ENCODE measurements at regions of chr15 and their contacts with region 1.

Region 1: DNA sequence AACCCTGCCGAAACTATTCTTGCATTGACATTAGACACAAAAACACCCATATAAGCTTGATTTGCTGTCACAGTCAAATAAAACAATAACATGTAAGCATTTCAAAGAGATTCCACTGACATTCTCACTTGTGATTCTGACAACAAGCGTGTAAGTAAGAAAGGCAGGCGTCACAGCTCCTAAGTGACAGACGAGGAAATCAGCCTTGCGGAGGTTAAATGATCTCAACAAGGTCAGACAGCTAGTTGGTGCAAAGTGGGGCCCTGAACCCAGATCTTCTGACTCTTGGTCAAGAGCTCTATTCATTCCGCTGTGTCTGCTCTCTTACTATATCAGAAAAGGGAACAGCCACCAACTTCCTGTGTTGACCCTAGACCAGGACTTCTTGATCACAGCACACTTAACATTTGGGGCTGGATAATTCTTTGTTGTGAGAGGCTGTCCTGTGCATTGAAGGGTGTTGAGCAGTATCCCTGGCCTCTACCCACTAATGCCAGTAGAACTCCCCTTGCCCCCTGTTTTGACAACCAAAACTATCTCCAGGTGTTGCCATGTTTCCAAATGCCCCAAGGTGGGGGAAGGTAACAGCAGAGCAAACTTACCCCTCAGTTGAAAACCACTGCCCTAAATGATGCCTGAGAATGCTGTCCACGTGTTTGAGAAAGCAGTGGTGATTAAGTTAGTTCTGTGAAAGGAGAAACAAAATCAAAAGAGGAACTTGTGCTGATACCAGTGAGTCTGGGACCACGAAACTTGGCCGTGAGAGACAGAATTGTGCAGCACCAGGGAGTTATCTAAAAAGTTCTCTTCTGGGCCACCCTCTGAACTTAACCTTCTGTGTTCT is 86.1 kb downstream of the LIPC start:
- DNase-seq: peak; percentile 85
- ATAC-seq: peak; percentile 88
- H3K4me3 ChIP-seq: no peak overlapping the region
- H3K27ac ChIP-seq: peak overlapping the region; percentile 95
- H3K4me1 ChIP-seq: peaks cover 59% of the 10 kb centered on the region
- H3K27me3 ChIP-seq: no peaks in the 10 kb centered on the region
- CTCF ChIP-seq: no peak
- EP300 ChIP-seq: peak in 1 of 2 experiments; percentile 54; a peak in 1 of 4 replicates
- POLR2A ChIP-seq: no peak
- RAD21 ChIP-seq: no peak

Region 2: DNA sequence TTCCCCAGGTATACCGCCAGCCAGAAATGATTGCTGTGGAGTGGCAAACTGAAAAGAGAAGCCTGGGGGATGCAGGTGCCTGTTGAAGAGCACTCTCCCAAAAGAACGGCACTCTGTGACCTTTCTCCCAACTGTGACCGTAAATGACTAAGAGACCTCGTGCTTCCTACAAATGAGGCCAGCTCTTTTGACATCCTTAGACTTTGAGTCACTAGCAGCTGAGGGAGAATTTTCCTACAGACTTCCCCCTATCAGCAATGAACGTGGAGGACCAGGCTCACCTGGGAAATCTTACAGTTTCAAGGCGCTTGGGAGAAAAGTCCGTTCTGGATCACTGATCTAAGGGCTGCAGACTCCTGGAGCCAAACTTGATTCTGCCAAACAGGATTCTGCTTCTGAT is 371.2 kb before region 1 on chr15:
- CTCF ChIA-PET with region 1: no interaction called
- POLR2A ChIA-PET with region 1: no interaction called
- RAD21 ChIA-PET with region 1: no interaction called
- SMC1A ChIA-PET with region 1: no interaction called
- in situ Hi-C with region 1: no loop called
- intact Hi-C with region 1: no loop called
- DNase-seq: no peak
- ATAC-seq: no peak
- H3K4me3 ChIP-seq: no peak overlapping the region
- H3K27ac ChIP-seq: no peak overlapping the region
- H3K4me1 ChIP-seq: no peaks in the 10 kb centered on the region
- H3K27me3 ChIP-seq: 0 out of 4 replicates have a peak, but pooled peaks cover 0 to 2% of the 10 kb centered on the region in 2 experiments
- CTCF ChIP-seq: no peak
- EP300 ChIP-seq: no peak
- POLR2A ChIP-seq: no peak
- RAD21 ChIP-seq: no peak

Region 3: DNA sequence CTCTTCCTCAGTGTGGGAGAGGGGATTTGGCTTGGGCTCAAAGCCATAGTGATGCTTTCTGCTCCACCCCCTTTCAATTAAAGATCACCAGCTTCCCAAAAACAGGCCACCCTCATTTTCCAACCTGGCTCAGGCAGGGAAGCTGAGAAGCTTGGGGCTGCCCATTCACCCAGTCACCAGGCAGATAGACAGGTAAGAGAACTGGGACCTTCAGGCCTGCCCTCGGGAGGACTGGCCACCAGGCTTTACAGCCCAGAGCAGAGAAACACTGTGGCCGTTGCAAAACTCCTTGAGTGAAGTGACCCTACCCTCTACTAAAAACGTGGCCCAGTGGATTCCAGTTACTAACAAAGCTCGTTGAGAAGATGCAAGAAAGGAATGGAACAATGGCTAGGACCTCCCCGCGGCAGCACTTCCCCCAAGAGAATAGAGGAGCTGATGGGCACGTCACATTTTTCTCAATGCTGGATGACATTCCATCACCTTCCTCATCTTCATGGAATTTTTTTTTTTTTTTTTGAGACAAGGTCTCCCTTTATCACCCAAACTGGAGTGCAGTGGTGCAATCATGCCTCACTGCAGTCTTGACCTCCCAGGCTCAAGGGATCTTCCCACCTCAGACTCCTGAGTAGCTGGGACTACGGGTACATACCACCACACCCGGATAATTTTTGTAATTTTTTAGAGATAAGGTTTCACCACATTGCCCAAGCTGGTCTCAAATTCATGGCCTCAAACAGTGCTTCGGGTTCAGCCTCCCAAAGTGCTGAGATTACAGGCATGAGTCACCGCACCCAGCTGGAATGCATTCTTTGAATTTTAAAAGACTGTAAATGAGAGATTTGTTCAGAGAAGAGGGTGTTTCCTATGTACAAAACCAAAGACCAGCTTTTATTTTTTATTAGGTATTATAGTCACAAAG is 48.2 kb before region 1 on chr15:
- CTCF ChIA-PET with region 1: interaction called, 6 read pairs
- POLR2A ChIA-PET with region 1: no interaction called
- RAD21 ChIA-PET with region 1: interaction called, 4 read pairs
- SMC1A ChIA-PET with region 1: interaction called, 12 read pairs
- in situ Hi-C with region 1: no loop called
- intact Hi-C with region 1: loop called (anchors 5 kb)
- DNase-seq: no peak
- ATAC-seq: no peak
- H3K4me3 ChIP-seq: no peak overlapping the region
- H3K27ac ChIP-seq: no peak overlapping the region
- H3K4me1 ChIP-seq: peaks cover 28% of the 10 kb centered on the region
- H3K27me3 ChIP-seq: no peaks in the 10 kb centered on the region
- CTCF ChIP-seq: no peak
- EP300 ChIP-seq: no peak
- POLR2A ChIP-seq: no peak
- RAD21 ChIP-seq: no peak

Region 4: DNA sequence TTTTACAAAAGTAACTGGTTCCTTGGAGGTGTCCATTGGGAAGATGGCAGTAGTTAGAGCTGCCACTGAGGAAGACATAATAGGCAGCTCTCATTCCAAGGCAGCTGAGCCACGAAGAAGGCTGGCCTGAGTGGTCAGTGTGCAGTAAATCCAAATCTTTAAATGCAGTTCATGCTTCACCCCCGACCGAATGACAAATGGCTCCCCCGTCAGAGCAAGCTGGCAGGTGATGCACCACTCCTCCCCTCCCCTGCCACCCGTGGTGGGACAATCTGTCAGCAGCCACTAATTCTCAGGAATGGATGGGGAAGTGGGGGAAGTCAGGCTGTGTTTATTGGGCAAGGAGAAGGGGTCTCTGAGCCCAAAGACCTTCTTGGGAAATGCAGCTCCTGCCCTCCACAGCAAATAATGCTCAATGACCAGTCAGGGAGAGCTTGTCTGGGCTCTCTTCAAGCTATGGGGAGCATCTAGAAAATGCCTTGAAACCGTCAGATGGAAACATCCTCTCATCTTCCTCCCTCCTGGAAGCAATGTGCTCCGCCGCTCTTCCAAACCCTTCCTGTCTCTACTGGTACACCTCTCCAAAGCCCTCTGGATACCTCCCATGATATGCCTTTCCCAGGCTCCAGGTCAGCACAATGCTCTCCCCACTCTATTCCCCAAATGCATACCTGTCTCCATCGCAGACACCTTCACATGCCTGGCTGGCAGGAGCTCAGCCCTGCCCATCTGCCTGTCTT is 20.7 kb before region 1 on chr15:
- CTCF ChIA-PET with region 1: interaction called, 3 read pairs
- POLR2A ChIA-PET with region 1: interaction called, 11 read pairs
- RAD21 ChIA-PET with region 1: interaction called, 4 read pairs
- SMC1A ChIA-PET with region 1: interaction called, 3 read pairs
- in situ Hi-C with region 1: no loop called
- intact Hi-C with region 1: no loop called
- DNase-seq: no peak
- ATAC-seq: no peak
- H3K4me3 ChIP-seq: no peak overlapping the region
- H3K27ac ChIP-seq: no peak overlapping the region
- H3K4me1 ChIP-seq: no peaks in the 10 kb centered on the region
- H3K27me3 ChIP-seq: no peaks in the 10 kb centered on the region
- CTCF ChIP-seq: no peak
- EP300 ChIP-seq: no peak
- POLR2A ChIP-seq: no peak
- RAD21 ChIP-seq: no peak

Region 5: DNA sequence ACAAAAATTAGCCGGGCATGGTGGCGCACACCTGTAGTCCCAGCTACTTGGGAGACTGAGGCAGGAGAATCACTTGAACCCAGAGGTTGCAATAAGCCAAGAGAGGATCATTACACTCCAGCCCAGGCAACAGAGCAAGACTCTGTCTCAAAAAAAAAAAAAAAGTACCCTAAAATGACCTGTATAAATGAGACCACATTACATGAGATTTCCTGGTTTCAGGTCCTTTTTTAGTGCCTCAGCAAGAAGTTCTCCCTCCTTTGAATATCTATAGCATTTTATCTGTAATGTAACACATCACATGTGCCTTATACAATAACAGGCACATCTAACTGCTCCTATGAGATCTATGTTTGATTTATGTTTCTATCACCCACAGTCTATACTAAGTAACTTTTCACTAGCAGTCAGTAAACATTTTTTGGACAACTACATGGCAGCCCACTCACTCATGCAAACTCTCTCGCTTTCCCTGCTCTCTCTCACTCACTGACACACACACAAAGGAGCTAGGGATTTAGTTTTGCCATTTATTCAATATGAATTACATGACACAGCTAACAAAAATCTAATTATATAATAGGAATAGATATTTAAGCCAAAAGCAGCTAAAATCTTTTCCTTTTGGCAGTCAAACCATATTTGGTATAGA is 197.5 kb after region 1 on chr15:
- CTCF ChIA-PET with region 1: no interaction called
- POLR2A ChIA-PET with region 1: no interaction called
- RAD21 ChIA-PET with region 1: no interaction called
- SMC1A ChIA-PET with region 1: no interaction called
- in situ Hi-C with region 1: no loop called
- intact Hi-C with region 1: no loop called
- DNase-seq: no peak
- ATAC-seq: peak; percentile 75
- H3K4me3 ChIP-seq: no peak overlapping the region
- H3K27ac ChIP-seq: no peak overlapping the region; the same call in 1 of the 2 replicates
- H3K4me1 ChIP-seq: peaks cover 3% of the 10 kb centered on the region; the same call in 1 of the 2 replicates
- H3K27me3 ChIP-seq: no peaks in the 10 kb centered on the region
- CTCF ChIP-seq: no peak
- EP300 ChIP-seq: no peak
- POLR2A ChIP-seq: no peak
- RAD21 ChIP-seq: no peak

Measured in GM12878 (cell line).